Sigmoid colon (tissue), 7 donors: ENCODE measurements at regions of chr12 and their contacts with region 1.

Region 1: GRCh38 chr12:11793921-11794710 is 144.6 kb downstream of the ETV6 start:
- DNase-seq: peak; percentile 78
- H3K4me3 ChIP-seq: peak overlapping the region in 3 of 4 donors; percentile 15 to 23 (median 17)
- H3K27ac ChIP-seq: peak overlapping the region; percentile 82 to 91 (median 84)
- H3K4me1 ChIP-seq: peaks cover 0 to 83% (median 68%) of the 10 kb centered on the region in 4 donors
- H3K27me3 ChIP-seq: no peaks in the 10 kb centered on the region
- CTCF ChIP-seq: no peak
- EP300 ChIP-seq: no peak
- POLR2A ChIP-seq: peak in 1 of 2 donors; percentile 17

Region 2: GRCh38 chr12:11658791-11659190 is 135.3 kb before region 1 on chr12:
- intact Hi-C with region 1: loop called (anchors 5 kb)
- DNase-seq: no peak
- H3K4me3 ChIP-seq: no peak overlapping the region
- H3K27ac ChIP-seq: peak overlapping the region; percentile 48 to 99 (median 75)
- H3K4me1 ChIP-seq: peaks cover 0 to 98% (median 87%) of the 10 kb centered on the region in 4 donors
- H3K27me3 ChIP-seq: no peaks in the 10 kb centered on the region
- CTCF ChIP-seq: no peak
- EP300 ChIP-seq: no peak
- POLR2A ChIP-seq: no peak

Region 3: GRCh38 chr12:11862798-11863197 is 68.7 kb after region 1 on chr12:
- intact Hi-C with region 1: loop called (anchors 5 kb)
- DNase-seq: no peak
- H3K4me3 ChIP-seq: no peak overlapping the region
- H3K27ac ChIP-seq: peak overlapping the region; percentile 82 to 88 (median 84)
- H3K4me1 ChIP-seq: peaks cover 0 to 54% (median 51%) of the 10 kb centered on the region in 4 donors
- H3K27me3 ChIP-seq: no peaks in the 10 kb centered on the region
- CTCF ChIP-seq: no peak
- EP300 ChIP-seq: no peak
- POLR2A ChIP-seq: no peak

Region 4: DNA sequence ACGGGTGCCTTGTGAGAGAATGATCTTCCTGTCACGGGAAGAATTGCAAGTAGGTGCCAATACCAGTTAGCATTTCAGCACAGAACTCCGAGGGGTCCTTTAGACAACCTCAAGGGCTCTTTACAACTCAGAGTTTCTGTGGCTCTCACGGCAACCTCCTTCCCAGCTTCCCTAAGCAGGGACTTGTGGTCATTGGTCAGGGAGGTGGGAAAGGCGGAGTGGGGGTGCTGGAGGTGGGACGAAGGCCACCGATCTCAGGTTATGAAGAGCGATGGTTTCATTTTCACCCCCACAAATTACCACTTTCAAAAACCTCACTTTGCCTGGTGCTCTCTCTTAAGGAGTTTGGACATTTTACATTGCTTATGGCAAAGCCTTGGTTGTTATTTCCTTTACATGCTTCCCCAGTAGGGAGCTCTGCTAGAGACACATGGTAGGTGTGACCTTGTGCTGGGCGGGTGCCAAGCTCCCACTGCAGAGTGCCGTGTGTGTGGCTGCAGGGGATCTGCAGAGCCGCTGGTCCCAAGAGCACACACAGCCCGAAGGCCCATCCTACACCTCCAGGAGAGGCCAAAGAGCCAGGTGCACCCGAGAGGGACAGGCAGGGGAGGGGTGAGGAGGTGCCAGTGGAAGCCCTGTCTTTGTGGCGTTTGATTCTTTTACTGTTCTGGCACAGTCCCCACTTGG is 298.0 kb after region 1 on chr12:
- intact Hi-C with region 1: no loop called
- DNase-seq: no peak
- H3K4me3 ChIP-seq: no peak overlapping the region
- H3K27ac ChIP-seq: no peak overlapping the region
- H3K4me1 ChIP-seq: peaks cover 0 to 8% (median 0%) of the 10 kb centered on the region in 4 donors
- H3K27me3 ChIP-seq: no peaks in the 10 kb centered on the region
- CTCF ChIP-seq: no peak
- EP300 ChIP-seq: no peak
- POLR2A ChIP-seq: no peak